ENCODE measurements at regions of chr17 and their contacts with region 1.

Region 1: DNA sequence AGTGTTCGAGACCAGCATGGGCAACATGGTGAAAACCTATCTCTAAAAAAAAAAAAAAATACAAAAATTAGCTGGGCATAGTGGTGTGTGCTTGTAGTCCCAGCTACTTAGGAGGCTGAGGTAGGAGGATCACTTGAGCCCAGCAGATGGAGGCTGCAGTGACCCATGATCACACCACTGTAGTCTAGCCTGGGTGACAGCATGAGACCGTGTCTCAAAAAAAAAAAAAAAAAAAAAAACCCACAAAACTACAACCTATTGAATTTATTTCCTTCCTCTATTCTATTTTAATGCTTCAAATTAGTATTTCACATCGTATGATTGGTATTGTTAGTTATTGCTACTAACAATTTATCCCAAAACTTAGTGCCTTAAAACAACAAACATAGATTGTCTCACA is 9.4 kb upstream of the NUFIP2 start:
- DNase-seq: no peak
- ATAC-seq: no peak
- H3K4me3 ChIP-seq: no peak overlapping the region
- H3K27ac ChIP-seq: no peak overlapping the region
- H3K4me1 ChIP-seq: no peaks in the 10 kb centered on the region
- H3K27me3 ChIP-seq: no peaks in the 10 kb centered on the region
- CTCF ChIP-seq: no peak

Region 2: GRCh38 chr17:29364701-29365100 is 61.3 kb after region 1 on chr17:
- CTCF ChIA-PET with region 1: no interaction called
- POLR2A ChIA-PET with region 1: interaction called, 11 read pairs
- intact Hi-C with region 1: no loop called
- DNase-seq: no peak
- ATAC-seq: no peak
- H3K4me3 ChIP-seq: no peak overlapping the region
- H3K27ac ChIP-seq: no peak overlapping the region
- H3K4me1 ChIP-seq: no peaks in the 10 kb centered on the region
- H3K27me3 ChIP-seq: no peaks in the 10 kb centered on the region
- CTCF ChIP-seq: no peak

Region 3: DNA sequence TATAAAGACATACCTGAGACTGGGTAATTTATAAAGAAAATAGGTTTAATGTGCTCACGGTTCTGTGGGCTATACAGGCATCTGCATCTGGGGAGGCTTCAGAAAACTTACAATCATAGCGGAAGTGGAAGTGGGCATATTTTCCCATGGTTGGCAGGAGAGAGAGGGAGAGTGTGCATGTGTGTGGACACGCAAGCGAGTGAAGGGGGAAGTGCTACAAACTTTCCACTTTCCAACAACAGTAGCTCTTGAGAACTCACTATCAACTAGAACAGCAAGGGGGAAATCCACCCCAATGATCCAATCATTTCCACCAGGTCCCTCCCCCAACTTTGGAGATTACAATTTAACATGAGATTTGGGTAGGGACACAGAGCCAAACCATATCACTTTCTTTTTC is 97.9 kb after region 1 on chr17:
- CTCF ChIA-PET with region 1: no interaction called
- POLR2A ChIA-PET with region 1: no interaction called
- intact Hi-C with region 1: no loop called
- DNase-seq: no peak
- ATAC-seq: no peak
- H3K4me3 ChIP-seq: no peak overlapping the region
- H3K27ac ChIP-seq: no peak overlapping the region
- H3K4me1 ChIP-seq: no peaks in the 10 kb centered on the region
- H3K27me3 ChIP-seq: no peaks in the 10 kb centered on the region
- CTCF ChIP-seq: no peak

Measured in PC-3 (cell line).